GM13976 (cell line): ENCODE measurements at regions of chr5 and their contacts with region 1.

Region 1: GRCh38 chr5:56893251-56893951 is 16.0 kb upstream of the SETD9 start:
- DNase-seq: no peak
- CTCF ChIP-seq: no peak

Region 2: GRCh38 chr5:57117596-57117995 is 224.2 kb after region 1 on chr5:
- in situ Hi-C with region 1: no loop called
- DNase-seq: no peak
- CTCF ChIP-seq: no peak

Region 3: GRCh38 chr5:57137401-57137800 is 244.0 kb after region 1 on chr5:
- in situ Hi-C with region 1: loop called (anchors 10 kb)
- DNase-seq: no peak
- CTCF ChIP-seq: no peak

Region 4: DNA sequence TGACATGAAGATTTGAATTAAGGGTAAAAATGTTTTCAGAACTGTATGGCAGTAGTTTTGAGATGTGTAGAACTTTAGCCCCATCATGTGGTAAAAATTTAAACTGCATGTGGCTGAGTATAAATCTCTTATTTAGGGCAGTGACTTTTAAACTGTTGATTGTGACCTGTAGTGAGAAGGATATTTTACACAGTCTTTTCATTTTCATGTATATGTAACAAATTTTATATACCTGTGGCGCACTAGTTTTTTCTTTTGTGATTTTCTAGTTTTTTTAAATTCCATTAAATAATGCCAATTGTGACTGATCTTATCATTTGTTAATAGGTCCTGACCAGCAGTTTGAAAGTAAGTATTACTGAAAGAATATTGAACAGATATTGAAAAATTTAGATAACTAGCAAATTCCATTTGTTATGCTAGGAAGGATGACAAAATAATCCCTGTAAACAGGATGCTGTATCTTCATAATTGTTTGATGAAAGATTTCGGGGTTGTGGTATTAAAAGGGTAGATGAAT is 327.7 kb after region 1 on chr5:
- in situ Hi-C with region 1: loop called (anchors 10 kb)
- DNase-seq: peak; percentile 49
- CTCF ChIP-seq: peak; percentile 34